Caco-2 (cell line): ENCODE measurements at regions of chr7 and their contacts with region 1.

Region 1: GRCh38 chr7:41861642-41862041 is 158.8 kb upstream of the INHBA start:
- DNase-seq: no peak
- H3K4me3 ChIP-seq: no peak overlapping the region
- H3K4me3 Mint-ChIP-seq: no peak overlapping the region
- H3K27ac Mint-ChIP-seq: no peak overlapping the region
- H3K4me1 ChIP-seq: no peaks in the 10 kb centered on the region
- H3K4me1 Mint-ChIP-seq: no peaks in the 10 kb centered on the region
- H3K27me3 ChIP-seq: no peaks in the 10 kb centered on the region
- H3K27me3 Mint-ChIP-seq: peaks cover 5% of the 10 kb centered on the region
- CTCF ChIP-seq: no peak

Region 2: DNA sequence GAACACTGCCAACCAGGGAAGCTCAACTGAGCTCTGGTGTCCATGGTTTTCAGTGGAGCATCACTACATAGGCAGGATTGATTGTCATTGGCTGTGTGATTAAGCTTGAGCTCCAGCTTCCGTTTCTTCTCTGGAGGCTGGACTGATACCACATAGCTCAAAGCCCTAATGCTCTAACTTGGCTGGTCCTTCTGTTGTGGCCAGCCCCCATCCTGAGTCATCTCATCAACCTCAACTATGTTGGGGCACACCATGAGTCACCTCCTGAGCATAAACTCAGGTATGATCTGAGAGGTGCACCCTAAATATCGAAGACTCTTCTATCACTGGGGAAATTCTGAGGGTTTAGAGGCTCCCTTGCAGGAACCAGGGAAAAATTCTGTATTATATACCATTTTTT is 44.3 kb before region 1 on chr7:
- CTCF ChIA-PET with region 1: no interaction called
- POLR2A ChIA-PET with region 1: no interaction called
- intact Hi-C with region 1: no loop called
- DNase-seq: no peak
- H3K4me3 ChIP-seq: no peak overlapping the region
- H3K4me3 Mint-ChIP-seq: no peak overlapping the region
- H3K27ac Mint-ChIP-seq: no peak overlapping the region
- H3K4me1 ChIP-seq: no peaks in the 10 kb centered on the region
- H3K4me1 Mint-ChIP-seq: no peaks in the 10 kb centered on the region
- H3K27me3 ChIP-seq: peaks cover 2% of the 10 kb centered on the region
- H3K27me3 Mint-ChIP-seq: peaks cover 21% of the 10 kb centered on the region
- CTCF ChIP-seq: no peak

Region 3: DNA sequence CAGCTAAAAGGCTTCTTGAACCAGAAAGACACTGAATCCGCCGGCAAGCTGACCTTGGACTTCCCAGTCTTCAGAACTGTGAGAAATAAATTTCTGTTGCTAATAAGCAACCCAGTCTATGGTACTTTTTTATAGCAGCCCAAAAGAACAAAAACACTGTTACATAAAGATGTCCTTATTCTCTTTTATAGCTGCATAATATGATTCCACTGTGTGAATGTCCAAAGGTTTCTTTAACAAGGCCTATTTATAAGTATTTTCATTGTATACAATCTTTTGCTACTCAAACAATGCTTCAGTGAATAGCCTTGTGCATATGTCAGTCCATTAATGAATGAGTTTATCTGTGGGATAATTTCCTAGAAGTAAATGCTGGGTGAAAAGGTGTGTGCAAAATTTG is 32.0 kb after region 1 on chr7:
- CTCF ChIA-PET with region 1: no interaction called
- POLR2A ChIA-PET with region 1: no interaction called
- intact Hi-C with region 1: loop called (anchors 1 kb)
- DNase-seq: no peak
- H3K4me3 ChIP-seq: no peak overlapping the region
- H3K4me3 Mint-ChIP-seq: no peak overlapping the region
- H3K27ac Mint-ChIP-seq: no peak overlapping the region
- H3K4me1 ChIP-seq: no peaks in the 10 kb centered on the region
- H3K4me1 Mint-ChIP-seq: no peaks in the 10 kb centered on the region
- H3K27me3 ChIP-seq: no peaks in the 10 kb centered on the region
- H3K27me3 Mint-ChIP-seq: peaks cover 12% of the 10 kb centered on the region
- CTCF ChIP-seq: no peak